ENCODE measurements at regions of chr7 and their contacts with region 1.

Region 1: DNA sequence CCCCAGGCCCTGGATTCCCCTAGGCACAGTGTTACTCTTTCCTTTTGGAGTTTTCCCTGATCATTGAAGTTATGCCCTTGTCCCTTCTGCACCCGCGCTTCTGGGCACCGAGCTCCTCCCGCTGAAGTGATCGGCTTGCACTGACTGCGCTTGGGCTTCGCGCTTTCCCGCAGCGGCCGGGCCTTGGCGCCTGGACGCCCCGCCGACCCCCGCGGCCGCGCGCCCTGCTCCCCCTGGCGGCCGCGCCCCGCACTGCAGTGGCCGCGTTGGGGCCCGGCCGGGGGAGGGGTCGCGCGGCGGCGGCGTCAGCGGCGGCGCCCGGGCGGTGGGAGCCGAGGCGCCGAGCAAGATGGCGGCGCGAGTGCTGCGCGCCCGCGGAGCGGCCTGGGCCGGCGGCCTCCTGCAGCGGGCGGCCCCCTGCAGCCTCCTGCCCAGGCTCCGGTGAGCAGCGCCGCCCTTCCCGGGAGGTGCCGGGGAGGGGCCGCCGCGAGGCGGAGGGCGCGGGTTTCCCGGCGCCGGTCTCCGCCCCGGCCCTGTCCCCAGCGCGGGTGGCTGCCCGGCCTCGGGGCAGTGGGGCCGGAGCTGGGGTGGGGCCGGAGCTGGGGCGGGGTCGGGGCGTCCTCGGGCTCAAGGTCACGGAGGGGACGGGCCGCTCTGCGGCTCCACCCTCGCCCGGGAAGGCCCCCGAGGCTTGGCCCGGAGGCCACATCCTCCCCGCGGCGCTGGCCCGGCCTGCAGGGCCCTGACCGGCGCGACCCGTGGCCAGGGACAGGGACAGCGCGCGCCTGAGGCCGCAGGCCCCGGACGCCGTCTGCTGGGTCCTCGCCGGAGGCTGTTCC is at the start of gene NIPSNAP2:
- DNase-seq: peak; percentile 72
- ATAC-seq: peak; percentile 95
- H3K4me3 ChIP-seq: peak within 1 kb of the TSS; percentile 77 to 93 (median 88); a peak in 5 of 6 replicates
- H3K27ac ChIP-seq: peak within 1 kb of the TSS; percentile 91
- H3K4me1 ChIP-seq: peaks cover 44% of the 10 kb centered on the region
- H3K27me3 ChIP-seq: no peaks in the 10 kb centered on the region; a peak in 1 of 5 replicates
- CTCF ChIP-seq: peak; percentile 54
- EP300 ChIP-seq: no peak
- POLR2A ChIP-seq: peak; percentile 80
- RAD21 ChIP-seq: peak; percentile 82
- total RNA-seq, gene NIPSNAP2: 40.3 and 56.5 TPM in 2 replicates

Region 2: DNA sequence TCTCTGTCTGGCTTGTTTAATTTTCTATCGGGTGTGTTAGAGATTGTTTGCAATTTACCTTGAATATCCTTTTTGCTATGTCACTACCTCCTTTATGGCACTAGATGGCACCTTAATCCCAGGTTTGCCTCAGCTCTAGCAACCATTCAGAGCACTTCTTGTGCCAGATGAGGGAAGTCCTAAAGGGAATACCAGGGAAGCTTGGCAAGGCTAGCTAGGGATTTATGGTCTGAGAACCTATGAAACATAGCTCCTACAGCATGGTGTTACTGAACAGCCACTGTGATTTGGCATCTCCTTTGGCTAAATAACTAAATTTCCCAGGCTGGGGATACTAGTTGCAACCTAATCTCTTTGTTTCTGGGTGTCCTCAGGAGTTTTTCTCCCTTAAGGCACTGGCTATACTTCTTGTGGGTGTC is 323.2 kb before region 1 on chr7:
- CTCF ChIA-PET with region 1: interaction called, 8 read pairs
- POLR2A ChIA-PET with region 1: no interaction called
- in situ Hi-C with region 1: loop called (anchors 25 kb)
- intact Hi-C with region 1: loop called (anchors 2 kb)
- DNase-seq: peak; percentile 71
- ATAC-seq: peak; percentile 97
- H3K4me3 ChIP-seq: no peak overlapping the region
- H3K27ac ChIP-seq: no peak overlapping the region
- H3K4me1 ChIP-seq: no peaks in the 10 kb centered on the region
- H3K27me3 ChIP-seq: no peaks in the 10 kb centered on the region; a peak in 1 of 5 replicates
- CTCF ChIP-seq: peak; percentile 91
- EP300 ChIP-seq: no peak
- POLR2A ChIP-seq: no peak
- RAD21 ChIP-seq: peak; percentile 86

Region 3: GRCh38 chr7:55951637-55952351 is 12.7 kb before region 1 on chr7 and contains the start of gene MRPS17:
- CTCF ChIA-PET with region 1: no interaction called
- POLR2A ChIA-PET with region 1: interaction called, 21 read pairs
- in situ Hi-C with region 1: no loop called
- intact Hi-C with region 1: no loop called
- DNase-seq: peak; percentile 89
- ATAC-seq: peak; percentile 98
- H3K4me3 ChIP-seq: peak within 1 kb of the TSS; percentile 79 to 99 (median 84)
- H3K27ac ChIP-seq: peak within 1 kb of the TSS; percentile 68
- H3K4me1 ChIP-seq: peaks cover 34% of the 10 kb centered on the region
- H3K27me3 ChIP-seq: no peaks in the 10 kb centered on the region; a peak in 1 of 5 replicates
- CTCF ChIP-seq: peak; percentile 28; the same call in 1 of the 2 replicates
- EP300 ChIP-seq: no peak
- POLR2A ChIP-seq: peak; percentile 90 to 96
- RAD21 ChIP-seq: peak; percentile 37; the same call in 1 of the 2 replicates
- total RNA-seq, gene MRPS17: 31.3 and 39.2 TPM in 2 replicates

Region 4: DNA sequence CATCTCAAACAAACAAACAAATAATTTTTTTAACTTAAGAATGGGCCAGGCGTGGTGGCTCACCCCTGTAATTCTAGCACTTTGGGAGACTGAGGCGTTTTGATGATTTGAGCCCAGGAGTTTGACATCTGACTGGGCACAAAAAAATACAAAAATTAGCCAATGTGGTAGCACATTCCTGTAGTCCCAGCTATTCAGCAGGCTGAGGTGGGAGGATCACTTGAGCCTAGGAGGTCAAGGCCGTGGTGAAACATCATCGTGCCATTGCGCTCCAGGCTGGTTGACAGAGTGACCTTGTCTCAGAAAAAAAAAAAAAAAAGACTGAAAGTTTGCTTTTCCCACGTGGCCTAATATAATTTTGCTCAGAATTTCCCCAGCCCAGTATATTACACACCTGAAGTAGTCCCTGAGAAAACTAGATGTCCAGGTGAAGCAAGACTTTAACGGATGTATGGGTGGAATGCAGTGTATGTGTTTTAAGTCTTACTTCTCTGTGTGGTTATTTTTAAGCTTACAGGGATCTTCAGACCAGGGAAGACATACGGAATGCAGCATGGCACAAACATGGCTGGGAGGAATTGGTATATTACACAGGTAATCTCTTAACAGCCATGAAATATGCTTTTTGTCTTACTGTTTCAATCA is 32.5 kb after region 1 on chr7:
- CTCF ChIA-PET with region 1: no interaction called
- POLR2A ChIA-PET with region 1: interaction called, 14 read pairs
- in situ Hi-C with region 1: no loop called
- intact Hi-C with region 1: no loop called
- DNase-seq: peak; percentile 91
- ATAC-seq: peak; percentile 87
- H3K4me3 ChIP-seq: no peak overlapping the region; a peak in 1 of 6 replicates
- H3K27ac ChIP-seq: peak overlapping the region; percentile 64
- H3K4me1 ChIP-seq: peaks cover 53% of the 10 kb centered on the region
- H3K27me3 ChIP-seq: no peaks in the 10 kb centered on the region
- CTCF ChIP-seq: 0 out of 2 replicates have a peak, but pooled peaks have one; percentile 11
- EP300 ChIP-seq: peak; percentile 32 to 33; a peak in 1 of 4 replicates
- POLR2A ChIP-seq: no peak
- RAD21 ChIP-seq: no peak

Region 5: DNA sequence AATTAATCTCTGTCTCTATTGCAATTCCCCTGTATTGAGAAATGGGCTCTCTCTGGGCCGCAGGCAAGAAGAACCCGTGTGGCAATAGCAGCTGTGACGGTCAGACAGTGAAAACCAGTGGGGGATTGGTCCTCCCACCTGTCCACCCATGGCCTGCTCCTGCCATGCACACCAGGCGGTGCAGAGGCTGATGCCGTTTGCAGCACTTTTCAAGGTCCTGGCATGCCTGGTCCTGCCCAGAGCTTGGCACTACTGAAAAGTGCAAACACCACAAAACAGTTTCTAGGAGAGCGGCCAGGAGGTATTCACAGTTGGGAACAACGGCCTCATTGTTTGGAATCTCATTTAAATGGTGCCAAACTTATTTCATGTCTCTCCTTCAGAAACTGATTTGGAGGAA is 45.2 kb after region 1 on chr7:
- CTCF ChIA-PET with region 1: no interaction called
- POLR2A ChIA-PET with region 1: interaction called, 17 read pairs
- in situ Hi-C with region 1: no loop called
- intact Hi-C with region 1: loop called (anchors 5 kb)
- DNase-seq: peak; percentile 65
- ATAC-seq: peak; percentile 5; the same call in 2 of the 3 replicates
- H3K4me3 ChIP-seq: no peak overlapping the region
- H3K27ac ChIP-seq: peak overlapping the region; percentile 65
- H3K4me1 ChIP-seq: peaks cover 63% of the 10 kb centered on the region
- H3K27me3 ChIP-seq: no peaks in the 10 kb centered on the region
- CTCF ChIP-seq: no peak
- EP300 ChIP-seq: no peak
- POLR2A ChIP-seq: peak in 1 of 2 experiments; percentile 47; a peak in 1 of 4 replicates
- RAD21 ChIP-seq: no peak

Region 6: GRCh38 chr7:56051339-56052191 is 87.1 kb after region 1 on chr7 and contains the starts of genes CCT6A and PSPH:
- CTCF ChIA-PET with region 1: no interaction called
- POLR2A ChIA-PET with region 1: interaction called, 26 read pairs
- in situ Hi-C with region 1: no loop called
- intact Hi-C with region 1: no loop called
- DNase-seq: peak; percentile 96
- ATAC-seq: peak; percentile 94
- H3K4me3 ChIP-seq: peak within 1 kb of the TSS; percentile 81 to 98 (median 91)
- H3K27ac ChIP-seq: peak within 1 kb of the TSS; percentile 87
- H3K4me1 ChIP-seq: peaks cover 79% of the 10 kb centered on the region
- H3K27me3 ChIP-seq: no peaks in the 10 kb centered on the region; a peak in 1 of 5 replicates
- CTCF ChIP-seq: peak; percentile 8; the same call in 1 of the 2 replicates
- EP300 ChIP-seq: peak in 1 of 2 experiments; percentile 12; a peak in 1 of 4 replicates
- POLR2A ChIP-seq: peak; percentile 80
- RAD21 ChIP-seq: no peak; the same call in 1 of the 2 replicates
- total RNA-seq, gene CCT6A: 292 and 425 TPM in 2 replicates
- total RNA-seq, gene PSPH: 124 and 175 TPM in 2 replicates

Region 7: DNA sequence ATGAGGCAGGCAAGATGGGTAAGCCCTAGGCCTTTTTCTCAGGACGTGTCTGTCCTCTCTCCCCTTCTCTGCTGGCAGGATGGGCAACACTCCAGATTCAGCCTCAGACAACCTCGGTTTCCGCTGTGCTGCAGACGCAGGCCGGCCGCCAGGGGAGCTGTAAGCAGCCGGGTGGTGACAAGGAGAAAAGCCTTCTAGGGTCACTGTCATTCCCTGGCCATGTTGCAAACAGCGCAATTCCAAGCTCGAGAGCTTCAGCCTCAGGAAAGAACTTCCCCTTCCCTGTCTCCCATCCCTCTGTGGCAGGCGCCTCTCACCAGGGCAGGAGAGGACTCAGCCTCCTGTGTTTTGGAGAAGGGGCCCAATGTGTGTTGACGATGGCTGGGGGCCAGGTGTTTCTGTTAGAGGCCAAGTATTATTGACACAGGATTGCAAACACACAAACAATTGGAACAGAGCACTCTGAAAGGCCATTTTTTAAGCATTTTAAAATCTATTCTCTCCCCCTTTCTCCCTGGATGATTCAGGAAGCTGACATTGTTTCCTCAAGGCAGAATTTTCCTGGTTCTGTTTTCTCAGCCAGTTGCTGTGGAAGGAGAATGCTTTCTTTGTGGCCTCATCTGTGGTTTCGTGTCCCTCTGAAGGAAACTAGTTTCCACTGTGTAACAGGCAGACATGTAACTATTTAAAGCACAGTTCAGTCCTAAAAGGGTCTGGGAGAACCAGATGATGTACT is 115.1 kb after region 1 on chr7:
- CTCF ChIA-PET with region 1: no interaction called
- POLR2A ChIA-PET with region 1: interaction called, 11 read pairs
- in situ Hi-C with region 1: no loop called
- intact Hi-C with region 1: no loop called
- DNase-seq: peak; percentile 56
- ATAC-seq: peak; percentile 91
- H3K4me3 ChIP-seq: no peak overlapping the region
- H3K27ac ChIP-seq: peak overlapping the region; percentile 48
- H3K4me1 ChIP-seq: peaks cover 21% of the 10 kb centered on the region
- H3K27me3 ChIP-seq: no peaks in the 10 kb centered on the region
- CTCF ChIP-seq: peak; percentile 73
- EP300 ChIP-seq: no peak
- POLR2A ChIP-seq: no peak
- RAD21 ChIP-seq: no peak

Region 8: GRCh38 chr7:56188823-56189346 is 224.4 kb after region 1 on chr7:
- CTCF ChIA-PET with region 1: no interaction called
- POLR2A ChIA-PET with region 1: no interaction called
- in situ Hi-C with region 1: no loop called
- intact Hi-C with region 1: no loop called
- DNase-seq: no peak
- ATAC-seq: no peak
- H3K4me3 ChIP-seq: no peak overlapping the region
- H3K27ac ChIP-seq: no peak overlapping the region
- H3K4me1 ChIP-seq: no peaks in the 10 kb centered on the region
- H3K27me3 ChIP-seq: no peaks in the 10 kb centered on the region
- CTCF ChIP-seq: no peak
- EP300 ChIP-seq: no peak
- POLR2A ChIP-seq: no peak
- RAD21 ChIP-seq: no peak